ENCODE measurements at regions of chr9 and their contacts with region 1.

Region 1: DNA sequence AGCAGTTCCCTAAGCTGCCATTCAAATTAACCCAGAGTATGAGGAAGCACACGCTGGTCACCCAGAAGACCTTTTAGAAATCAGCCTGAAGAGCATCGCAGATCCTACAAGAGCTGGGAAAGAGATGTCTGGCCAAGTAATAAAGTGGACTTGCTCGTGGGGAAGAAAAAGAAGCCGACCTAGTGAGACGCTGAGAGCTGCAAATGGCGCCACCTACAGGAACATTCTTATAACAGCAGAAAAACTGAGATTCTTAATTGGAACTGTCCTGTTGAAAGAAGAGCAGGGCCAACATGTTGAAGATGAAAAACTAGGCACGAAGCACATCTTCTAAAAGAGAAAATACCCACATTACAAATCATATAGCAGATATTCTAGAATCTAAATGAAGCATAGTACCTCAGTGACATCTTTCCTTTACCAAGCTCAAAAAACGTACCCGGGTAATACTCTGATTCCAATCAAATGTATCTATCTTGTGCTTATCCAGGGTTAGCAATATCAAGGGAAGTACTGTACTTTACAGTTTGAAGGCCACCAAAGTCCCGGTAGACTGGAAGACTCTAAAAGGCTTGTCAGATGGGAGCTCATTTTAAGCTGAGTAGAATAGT is 3.9 kb upstream of the GNAQ start:
- DNase-seq: peak in 1 of 3 donors; percentile 71
- ATAC-seq: peak; percentile 34
- H3K4me3 ChIP-seq: no peak overlapping the region
- H3K4me1 ChIP-seq: peaks cover 36% of the 10 kb centered on the region
- CTCF ChIP-seq: peak; percentile 78

Region 2: DNA sequence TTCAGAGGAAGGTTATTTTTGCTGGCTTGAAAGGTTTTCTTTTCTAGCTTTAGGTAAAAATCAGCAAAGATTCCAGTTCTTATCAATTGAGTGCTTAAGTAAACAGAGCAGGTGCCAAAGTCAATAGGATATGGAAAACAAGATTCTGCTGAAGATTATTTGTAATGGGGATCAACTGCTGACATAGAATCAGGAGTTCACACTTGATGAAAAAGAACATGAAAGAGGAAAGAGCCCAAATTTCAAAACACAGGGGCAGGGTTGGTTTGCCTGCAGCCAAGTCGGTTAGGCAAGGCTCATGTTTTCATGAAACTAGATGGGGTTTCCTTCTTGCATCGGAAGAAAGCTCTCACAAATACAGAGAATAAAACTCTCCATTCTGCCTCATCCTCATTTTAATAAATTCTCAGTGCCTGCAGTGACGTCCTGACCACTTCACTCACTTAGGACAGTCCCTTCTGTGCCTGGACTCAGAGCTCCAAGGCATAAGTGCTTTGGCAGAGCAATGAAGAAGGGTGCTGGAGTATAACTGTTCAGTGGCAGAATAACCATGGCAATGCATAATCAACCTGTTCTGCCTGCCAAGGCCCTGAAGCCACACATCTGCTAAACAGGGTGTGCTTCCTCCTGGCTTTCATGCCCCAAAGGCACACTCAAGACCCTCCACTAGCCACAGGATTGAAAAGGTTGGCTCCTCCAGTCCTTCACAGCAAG is 183.4 kb before region 1 on chr9:
- intact Hi-C with region 1: loop called in 1 of 2 experiments (anchors 10 kb)
- DNase-seq: no peak
- ATAC-seq: no peak
- H3K4me3 ChIP-seq: no peak overlapping the region
- H3K4me1 ChIP-seq: peaks cover 6% of the 10 kb centered on the region
- CTCF ChIP-seq: no peak

Region 3: GRCh38 chr9:77896938-77897667 is 138.4 kb before region 1 on chr9:
- intact Hi-C with region 1: no loop called
- DNase-seq: no peak
- ATAC-seq: no peak
- H3K4me3 ChIP-seq: no peak overlapping the region
- H3K4me1 ChIP-seq: no peaks in the 10 kb centered on the region
- CTCF ChIP-seq: no peak

Region 4: DNA sequence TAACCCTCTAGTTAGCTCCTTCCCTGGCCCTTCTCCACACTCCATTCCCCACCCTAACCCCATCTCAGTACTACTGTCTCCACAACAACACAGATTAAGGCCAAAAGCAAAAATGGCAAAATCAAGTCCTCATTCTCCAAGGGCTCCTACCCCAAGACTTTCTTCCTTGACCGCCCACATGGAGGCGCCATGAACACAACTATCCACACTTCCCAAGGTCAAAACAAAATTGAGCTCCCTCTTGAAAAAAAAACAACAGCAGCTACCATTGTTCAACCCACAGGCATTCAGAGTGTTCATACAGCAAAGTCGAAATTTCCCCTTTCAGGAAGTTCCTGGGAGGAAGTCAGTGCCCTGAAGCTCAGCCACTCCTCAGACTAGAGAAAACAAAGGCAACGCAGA is 58.3 kb before region 1 on chr9:
- intact Hi-C with region 1: loop called in 1 of 2 experiments (anchors 10 kb)
- DNase-seq: peak; percentile 61 to 76 (median 75)
- ATAC-seq: peak; percentile 68
- H3K4me3 ChIP-seq: no peak overlapping the region
- H3K4me1 ChIP-seq: peaks cover 48% of the 10 kb centered on the region
- CTCF ChIP-seq: no peak

Measured in mucosa of descending colon (tissue), 3 donors.